PC-9 (cell line): ENCODE measurements at regions of chr20 and their contacts with region 1.

Region 1: DNA sequence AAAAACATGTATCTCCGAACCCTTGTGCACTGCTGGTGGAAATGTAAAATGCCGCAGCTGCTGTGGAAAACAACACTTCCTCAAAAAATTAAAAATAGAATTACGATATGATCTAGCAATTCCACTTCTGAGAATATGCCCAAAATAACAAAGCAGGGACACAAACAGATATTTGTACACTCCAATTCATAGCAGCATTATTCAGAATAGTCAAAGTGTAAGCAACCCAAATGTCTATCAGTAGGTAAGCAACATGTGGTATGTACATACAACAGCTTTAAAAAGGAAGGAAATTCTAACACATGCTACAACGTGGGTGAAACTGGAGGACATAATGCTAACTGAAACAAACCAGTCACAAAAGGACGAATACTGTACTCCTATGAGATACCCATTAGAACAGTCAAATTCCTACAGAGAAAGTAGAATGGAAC is 5.7 kb upstream of the RAB5IF start:
- DNase-seq: no peak
- H3K4me3 ChIP-seq: no peak overlapping the region
- H3K27ac ChIP-seq: no peak overlapping the region
- H3K4me1 ChIP-seq: 0 out of 2 replicates have a peak, but pooled peaks cover 6% of the 10 kb centered on the region
- H3K27me3 ChIP-seq: no peaks in the 10 kb centered on the region
- CTCF ChIP-seq: no peak

Region 2: DNA sequence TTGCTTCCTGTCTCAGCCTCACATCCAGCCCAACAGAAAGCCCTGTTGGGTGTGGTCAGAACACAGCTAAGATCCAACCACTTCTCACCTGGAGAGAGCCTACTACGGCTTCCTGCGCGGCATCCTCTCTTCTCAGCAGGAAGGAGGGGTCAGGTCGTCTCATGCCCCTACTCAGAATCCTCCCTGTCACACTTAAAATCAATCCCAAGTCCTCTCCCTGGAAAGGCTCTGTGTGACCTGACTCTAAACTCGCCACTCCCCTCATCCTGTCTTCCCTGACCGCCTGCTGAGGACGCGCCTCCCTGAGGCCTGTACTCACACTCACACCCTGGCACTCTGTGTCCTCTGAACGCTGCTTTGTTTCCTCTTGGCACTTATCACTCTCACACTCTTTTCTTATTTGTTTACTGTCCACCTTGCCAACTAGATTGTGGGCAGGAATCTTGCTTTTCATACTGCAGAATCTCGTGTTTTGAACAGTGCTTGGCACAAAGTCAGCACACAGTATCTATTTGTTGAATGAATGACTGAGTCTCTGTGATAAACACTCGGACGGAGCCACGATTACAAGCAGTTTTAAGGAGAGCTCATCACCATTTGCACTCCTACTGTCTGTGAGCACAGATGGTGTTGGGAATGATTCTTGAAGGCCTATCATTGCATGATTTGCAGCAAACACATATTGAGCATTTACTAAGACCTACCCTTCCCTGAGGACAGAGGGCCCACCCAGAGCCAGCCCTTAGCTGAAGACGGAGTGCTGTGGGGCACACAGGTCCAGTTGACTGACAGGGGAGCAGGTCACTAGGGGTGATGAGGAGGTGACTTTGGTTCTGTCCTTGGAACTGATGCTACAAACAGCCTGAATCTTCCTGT is 24.4 kb after region 1 on chr20:
- CTCF ChIA-PET with region 1: interaction called, 12 read pairs
- POLR2A ChIA-PET with region 1: no interaction called
- intact Hi-C with region 1: no loop called
- DNase-seq: peak in 1 of 2 experiments; percentile 29
- H3K4me3 ChIP-seq: no peak overlapping the region
- H3K27ac ChIP-seq: no peak overlapping the region
- H3K4me1 ChIP-seq: no peaks in the 10 kb centered on the region
- H3K27me3 ChIP-seq: no peaks in the 10 kb centered on the region
- CTCF ChIP-seq: no peak